ENCODE measurements at regions of chr2 and their contacts with region 1.

Region 1: DNA sequence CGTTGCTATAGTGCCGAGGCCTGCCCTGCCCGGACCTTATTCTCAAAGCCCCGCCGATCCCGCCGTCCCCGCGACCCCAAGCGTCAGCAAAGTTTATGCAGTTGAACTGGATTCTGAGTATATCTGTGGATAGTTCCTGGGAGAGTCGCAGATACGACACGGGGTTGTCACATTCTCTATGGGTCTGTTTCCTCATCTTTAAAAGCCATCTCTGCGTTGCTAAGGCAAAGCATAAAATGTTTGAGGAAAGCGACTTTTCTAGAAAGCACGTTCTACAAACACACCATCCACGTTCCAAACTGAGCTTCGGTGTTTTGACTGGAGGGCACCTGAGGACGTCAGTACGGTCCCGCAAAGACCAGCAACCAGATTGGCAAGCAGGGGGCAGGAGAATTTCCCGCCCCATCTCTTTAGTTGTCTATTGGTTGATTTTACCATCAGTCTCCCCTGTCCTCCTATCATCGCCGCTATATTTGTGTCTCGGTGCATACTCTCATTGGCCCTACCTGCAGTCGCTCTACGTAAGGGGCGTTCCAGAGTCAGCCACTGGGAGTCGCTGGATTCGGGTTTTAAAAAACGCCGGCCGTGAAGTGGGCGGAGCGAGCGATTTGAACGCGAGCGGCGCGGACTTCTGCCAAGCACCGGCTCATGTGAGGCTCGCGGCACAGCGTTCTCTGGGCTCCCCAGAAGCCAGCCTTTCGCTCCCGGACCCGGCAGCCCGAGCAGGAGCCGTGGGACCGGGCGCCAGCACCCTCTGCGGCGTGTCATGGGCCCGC is at the start of gene CENPA:
- DNase-seq: peak; percentile 97 to 98 (median 98)
- H3K4me3 ChIP-seq: peak within 1 kb of the TSS; percentile 60 to 96 (median 85)
- H3K4me3 Mint-ChIP-seq: peak within 1 kb of the TSS; percentile 76 to 85
- H3K27ac ChIP-seq: peak within 1 kb of the TSS; percentile 18 to 65
- H3K27ac Mint-ChIP-seq: peak within 1 kb of the TSS; percentile 45 to 88 (median 83)
- H3K4me1 ChIP-seq: peaks cover 33 to 42% of the 10 kb centered on the region in 2 donors
- H3K4me1 Mint-ChIP-seq: peaks cover 50% of the 10 kb centered on the region
- H3K27me3 ChIP-seq: no peaks in the 10 kb centered on the region
- H3K27me3 Mint-ChIP-seq: peaks cover 0 to 2% (median 0%) of the 10 kb centered on the region in 3 donors
- CTCF ChIP-seq: no peak
- polyA plus RNA-seq, gene CENPA: 0.24 TPM in 1 of 3 donors, not detected in the others

Region 2: DNA sequence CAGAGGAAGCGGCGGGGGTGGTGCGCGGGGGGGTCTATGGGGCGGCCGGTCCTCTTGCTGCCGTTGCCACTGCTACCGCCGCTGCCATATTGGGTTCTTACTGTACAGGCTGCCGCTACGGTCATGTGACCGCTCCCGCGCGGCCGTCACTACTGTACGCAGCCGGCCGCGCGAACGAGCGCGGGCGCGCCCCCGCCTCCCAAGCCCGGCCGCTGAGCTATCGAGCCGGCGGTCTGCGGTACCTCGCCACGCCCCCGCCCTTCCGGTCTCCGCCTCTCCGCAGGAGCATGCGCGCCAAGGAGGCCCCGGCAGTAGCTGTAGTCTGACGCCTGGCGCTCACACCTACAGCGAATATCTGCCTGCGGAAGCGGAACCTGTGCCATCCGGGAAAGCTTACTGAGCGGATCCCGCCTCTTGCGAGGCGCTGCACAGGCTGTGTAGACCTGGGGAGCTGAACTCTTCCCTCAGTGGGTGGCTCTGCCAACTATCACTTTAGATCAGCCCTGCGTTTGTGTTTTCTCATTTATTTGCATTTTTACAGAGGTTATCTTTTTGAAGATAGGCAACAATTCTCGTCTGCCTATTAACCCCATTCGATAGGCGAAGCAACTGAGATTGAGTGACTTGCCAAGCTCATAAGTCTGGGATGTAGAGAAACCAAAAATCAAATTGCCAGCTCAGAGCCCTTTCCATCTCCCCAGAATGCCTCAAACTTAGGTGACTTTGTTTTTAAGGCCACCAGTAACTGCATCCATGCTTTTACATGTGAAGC is 907.1 kb before region 1 on chr2 and contains the start of gene ASXL2:
- intact Hi-C with region 1: loop called in 1 of 2 experiments (anchors 10 kb)
- DNase-seq: peak; percentile 97 to 99 (median 99)
- H3K4me3 ChIP-seq: peak within 1 kb of the TSS; percentile 69 to 95 (median 87)
- H3K4me3 Mint-ChIP-seq: peak within 1 kb of the TSS; percentile 97
- H3K27ac ChIP-seq: peak within 1 kb of the TSS; percentile 95 to 99
- H3K27ac Mint-ChIP-seq: peak within 1 kb of the TSS; percentile 97 to 100 (median 99)
- H3K4me1 ChIP-seq: peaks cover 14 to 26% of the 10 kb centered on the region in 2 donors
- H3K4me1 Mint-ChIP-seq: peaks cover 27% of the 10 kb centered on the region
- H3K27me3 ChIP-seq: no peaks in the 10 kb centered on the region
- H3K27me3 Mint-ChIP-seq: no peaks in the 10 kb centered on the region
- CTCF ChIP-seq: no peak
- polyA plus RNA-seq, gene ASXL2: 3.6 to 13.4 (median 7.1) TPM

Region 3: DNA sequence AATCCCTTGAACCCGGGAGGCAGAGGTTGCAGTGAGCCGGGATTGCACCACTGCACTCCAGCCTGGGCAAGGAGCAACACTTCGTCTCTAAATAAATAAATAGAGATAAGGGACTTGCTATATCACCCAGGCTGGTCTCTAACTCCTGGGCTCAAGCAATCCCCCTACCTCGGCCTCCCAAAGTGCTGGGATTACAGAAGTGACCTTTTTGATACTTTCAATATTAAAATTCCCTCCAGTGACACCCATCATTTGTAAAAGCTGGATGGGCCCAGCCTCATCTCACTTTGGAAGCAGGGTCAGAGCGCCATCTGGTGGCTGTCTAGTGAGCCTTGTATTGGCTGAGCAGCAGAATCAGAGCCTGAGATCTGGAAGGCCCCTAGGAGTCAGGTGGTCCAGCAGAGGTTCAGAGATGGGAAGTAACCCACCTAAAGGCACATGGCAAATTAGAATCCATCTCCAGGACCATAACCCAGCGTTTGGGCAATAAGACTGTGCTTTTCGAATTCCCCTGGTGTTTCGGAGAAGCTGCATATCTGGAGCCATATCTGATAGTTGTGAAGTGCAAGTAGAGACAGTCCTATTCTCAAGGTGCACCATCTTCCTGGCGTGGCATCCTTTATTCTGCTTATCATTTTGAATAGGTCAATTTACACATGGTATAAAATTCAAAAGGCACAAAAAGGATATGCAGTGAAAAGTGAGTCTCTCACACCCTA is 39.9 kb before region 1 on chr2:
- intact Hi-C with region 1: no loop called
- DNase-seq: peak; percentile 56 to 68 (median 65)
- H3K4me3 ChIP-seq: no peak overlapping the region
- H3K4me3 Mint-ChIP-seq: no peak overlapping the region
- H3K27ac ChIP-seq: no peak overlapping the region
- H3K27ac Mint-ChIP-seq: no peak overlapping the region
- H3K4me1 ChIP-seq: no peaks in the 10 kb centered on the region
- H3K4me1 Mint-ChIP-seq: peaks cover 4% of the 10 kb centered on the region
- H3K27me3 ChIP-seq: no peaks in the 10 kb centered on the region
- H3K27me3 Mint-ChIP-seq: peaks cover 1 to 10% (median 7%) of the 10 kb centered on the region in 3 donors
- CTCF ChIP-seq: peak; percentile 90

Region 4: GRCh38 chr2:26764078-26764887 is 21.3 kb before region 1 on chr2 and contains the start of gene SLC35F6:
- intact Hi-C with region 1: loop called in 1 of 2 experiments (anchors 2 kb)
- DNase-seq: peak; percentile 77 to 81 (median 78)
- H3K4me3 ChIP-seq: peak within 1 kb of the TSS; percentile 66 to 98 (median 94)
- H3K4me3 Mint-ChIP-seq: peak within 1 kb of the TSS; percentile 97 to 99
- H3K27ac ChIP-seq: peak within 1 kb of the TSS; percentile 75 to 91
- H3K27ac Mint-ChIP-seq: peak within 1 kb of the TSS; percentile 88 to 96 (median 94)
- H3K4me1 ChIP-seq: peaks cover 51 to 53% of the 10 kb centered on the region in 2 donors
- H3K4me1 Mint-ChIP-seq: peaks cover 49% of the 10 kb centered on the region
- H3K27me3 ChIP-seq: peaks cover 0 to 5% of the 10 kb centered on the region in 2 donors
- H3K27me3 Mint-ChIP-seq: peaks cover 1 to 15% (median 8%) of the 10 kb centered on the region in 3 donors
- CTCF ChIP-seq: no peak
- polyA plus RNA-seq, gene SLC35F6: 11.3 to 22.2 (median 15.1) TPM

Region 5: GRCh38 chr2:26982102-26982742 is 196.6 kb after region 1 on chr2:
- intact Hi-C with region 1: no loop called
- DNase-seq: peak in 2 of 3 donors; percentile 14 to 29
- H3K4me3 ChIP-seq: no peak overlapping the region
- H3K4me3 Mint-ChIP-seq: no peak overlapping the region
- H3K27ac ChIP-seq: no peak overlapping the region
- H3K27ac Mint-ChIP-seq: no peak overlapping the region
- H3K4me1 ChIP-seq: no peaks in the 10 kb centered on the region
- H3K4me1 Mint-ChIP-seq: no peaks in the 10 kb centered on the region
- H3K27me3 ChIP-seq: no peaks in the 10 kb centered on the region
- H3K27me3 Mint-ChIP-seq: peaks cover 5 to 9% (median 7%) of the 10 kb centered on the region in 3 donors
- CTCF ChIP-seq: peak; percentile 58